ENCODE measurements at regions of chr3 and their contacts with region 1.

Region 1: GRCh38 chr3:33030802-33031201 is 66.1 kb downstream of the GLB1 start:
- DNase-seq: peak in 2 of 5 donors; percentile 59 to 71
- H3K4me3 ChIP-seq: no peak overlapping the region
- H3K4me3 Mint-ChIP-seq: peak overlapping the region in 6 of 7 donors; percentile 1 to 59 (median 32)
- H3K27ac ChIP-seq: no peak overlapping the region
- H3K27ac Mint-ChIP-seq: peak overlapping the region in 7 of 8 donors; percentile 23 to 81 (median 48)
- H3K4me1 ChIP-seq: no peaks in the 10 kb centered on the region
- H3K4me1 Mint-ChIP-seq: peaks cover 25 to 40% (median 38%) of the 10 kb centered on the region in 3 donors
- H3K27me3 ChIP-seq: no peaks in the 10 kb centered on the region
- H3K27me3 Mint-ChIP-seq: no peaks in the 10 kb centered on the region

Region 2: DNA sequence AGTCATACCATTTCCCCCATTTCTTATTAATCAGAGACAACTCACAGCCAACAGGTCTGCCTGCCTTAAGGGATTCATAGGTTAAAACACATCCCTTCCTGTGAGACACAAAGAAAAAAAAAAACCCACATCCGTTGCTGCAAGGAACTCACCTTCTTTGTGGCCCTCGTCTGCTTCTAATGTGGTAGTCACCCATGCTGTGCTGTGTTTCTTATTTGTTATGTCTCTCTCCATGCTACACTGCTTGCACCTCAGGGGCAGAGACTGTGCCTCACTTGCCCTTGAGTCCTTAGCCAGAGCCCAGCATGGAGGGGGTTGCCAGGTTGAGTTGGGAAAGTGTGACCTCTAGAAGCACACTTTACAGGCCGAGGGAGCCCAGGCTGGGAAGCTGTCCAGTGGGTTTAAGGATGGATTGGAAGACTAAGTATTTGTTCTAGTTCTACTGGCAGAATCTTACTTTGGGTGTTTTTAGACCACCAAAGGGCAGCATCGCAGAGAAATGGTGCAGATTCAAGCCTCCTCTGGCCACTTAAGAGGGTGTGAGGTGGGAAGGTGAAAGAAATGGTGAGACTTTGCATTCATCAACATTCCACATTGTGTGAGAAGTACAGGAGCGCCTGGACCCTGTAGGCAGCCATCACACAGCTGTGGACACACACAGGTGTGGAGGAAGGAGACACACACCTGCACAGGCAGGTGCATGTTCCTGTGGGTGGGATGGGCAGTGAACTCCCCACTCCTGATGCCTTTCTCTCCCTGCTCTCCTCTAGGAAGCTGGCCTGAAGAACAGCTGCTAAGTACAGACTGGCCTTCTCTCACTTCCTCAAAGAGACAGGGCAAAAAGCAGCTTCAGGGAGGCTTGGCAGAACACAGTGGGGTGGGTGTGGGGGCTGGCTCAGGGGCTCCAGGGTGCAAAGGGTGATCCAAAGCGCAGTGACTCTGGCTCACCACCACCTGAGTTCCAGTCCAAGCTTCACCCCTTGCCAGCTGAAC is 17.3 kb after region 1 on chr3:
- CTCF ChIA-PET with region 1: interaction called, 28 read pairs
- POLR2A ChIA-PET with region 1: no interaction called
- DNase-seq: peak; percentile 31 to 84 (median 80)
- H3K4me3 ChIP-seq: peak overlapping the region; percentile 19
- H3K4me3 Mint-ChIP-seq: peak overlapping the region; percentile 62 to 87 (median 82)
- H3K27ac ChIP-seq: no peak overlapping the region
- H3K27ac Mint-ChIP-seq: peak overlapping the region; percentile 86 to 98 (median 96)
- H3K4me1 ChIP-seq: peaks cover 73% of the 10 kb centered on the region
- H3K4me1 Mint-ChIP-seq: peaks cover 68 to 91% (median 88%) of the 10 kb centered on the region in 3 donors
- H3K27me3 ChIP-seq: no peaks in the 10 kb centered on the region
- H3K27me3 Mint-ChIP-seq: no peaks in the 10 kb centered on the region

Measured in CD8-positive, alpha-beta memory T cell (primary cell).